Transverse colon (tissue), 4 donors: ENCODE measurements at regions of chr11 and their contacts with region 1.

Region 1: GRCh38 chr11:6505577-6506240 is 8.6 kb downstream of the DNHD1 start:
- DNase-seq: no peak
- H3K4me3 ChIP-seq: no peak overlapping the region
- H3K27ac ChIP-seq: peak overlapping the region in 2 of 4 donors; percentile 12 to 36
- H3K4me1 ChIP-seq: no peaks in the 10 kb centered on the region
- H3K27me3 ChIP-seq: no peaks in the 10 kb centered on the region
- CTCF ChIP-seq: peak; percentile 64 to 80 (median 73)
- EP300 ChIP-seq: no peak
- POLR2A ChIP-seq: no peak

Region 2: DNA sequence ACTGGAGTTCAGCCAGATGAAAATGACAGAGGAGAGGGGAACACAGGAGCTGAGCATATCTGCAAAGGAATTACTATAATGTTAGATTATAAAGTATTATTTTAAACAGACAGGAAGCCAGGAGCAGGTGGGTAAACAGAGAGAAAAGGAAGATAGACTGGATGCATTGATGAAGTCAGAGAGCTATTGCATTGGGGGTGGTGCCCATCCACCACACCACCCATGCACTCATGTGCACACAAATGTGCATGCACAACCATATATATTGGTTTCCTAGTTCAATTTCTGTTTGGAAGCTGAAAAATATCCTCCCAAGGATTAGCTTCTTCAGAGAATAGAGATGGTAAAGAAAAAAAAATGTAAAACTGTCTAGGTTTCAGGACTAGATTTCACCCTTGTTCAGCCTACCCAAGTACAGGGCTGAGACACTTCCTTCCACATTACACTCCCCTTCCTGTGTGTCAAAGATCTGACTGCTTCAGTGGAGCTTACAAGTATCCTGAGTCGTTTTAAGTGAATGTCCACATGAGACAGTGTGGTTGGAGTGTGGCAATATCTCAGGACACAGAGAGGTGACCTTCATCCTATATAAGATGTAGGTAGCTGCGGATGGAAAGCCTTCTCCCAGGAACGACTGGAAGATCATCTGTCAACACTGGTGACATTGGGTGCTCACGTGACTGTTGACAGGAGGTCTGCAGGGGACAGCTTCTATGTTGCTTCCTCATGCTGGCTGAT is 127.6 kb before region 1 on chr11:
- in situ Hi-C with region 1: loop called in 1 of 4 experiments (anchors 10 kb)
- intact Hi-C with region 1: loop called (anchors 10 kb)
- DNase-seq: no peak
- H3K4me3 ChIP-seq: no peak overlapping the region
- H3K27ac ChIP-seq: no peak overlapping the region
- H3K4me1 ChIP-seq: peaks cover 0 to 15% (median 0%) of the 10 kb centered on the region in 4 donors
- H3K27me3 ChIP-seq: no peaks in the 10 kb centered on the region
- CTCF ChIP-seq: no peak
- EP300 ChIP-seq: no peak
- POLR2A ChIP-seq: no peak

Region 3: DNA sequence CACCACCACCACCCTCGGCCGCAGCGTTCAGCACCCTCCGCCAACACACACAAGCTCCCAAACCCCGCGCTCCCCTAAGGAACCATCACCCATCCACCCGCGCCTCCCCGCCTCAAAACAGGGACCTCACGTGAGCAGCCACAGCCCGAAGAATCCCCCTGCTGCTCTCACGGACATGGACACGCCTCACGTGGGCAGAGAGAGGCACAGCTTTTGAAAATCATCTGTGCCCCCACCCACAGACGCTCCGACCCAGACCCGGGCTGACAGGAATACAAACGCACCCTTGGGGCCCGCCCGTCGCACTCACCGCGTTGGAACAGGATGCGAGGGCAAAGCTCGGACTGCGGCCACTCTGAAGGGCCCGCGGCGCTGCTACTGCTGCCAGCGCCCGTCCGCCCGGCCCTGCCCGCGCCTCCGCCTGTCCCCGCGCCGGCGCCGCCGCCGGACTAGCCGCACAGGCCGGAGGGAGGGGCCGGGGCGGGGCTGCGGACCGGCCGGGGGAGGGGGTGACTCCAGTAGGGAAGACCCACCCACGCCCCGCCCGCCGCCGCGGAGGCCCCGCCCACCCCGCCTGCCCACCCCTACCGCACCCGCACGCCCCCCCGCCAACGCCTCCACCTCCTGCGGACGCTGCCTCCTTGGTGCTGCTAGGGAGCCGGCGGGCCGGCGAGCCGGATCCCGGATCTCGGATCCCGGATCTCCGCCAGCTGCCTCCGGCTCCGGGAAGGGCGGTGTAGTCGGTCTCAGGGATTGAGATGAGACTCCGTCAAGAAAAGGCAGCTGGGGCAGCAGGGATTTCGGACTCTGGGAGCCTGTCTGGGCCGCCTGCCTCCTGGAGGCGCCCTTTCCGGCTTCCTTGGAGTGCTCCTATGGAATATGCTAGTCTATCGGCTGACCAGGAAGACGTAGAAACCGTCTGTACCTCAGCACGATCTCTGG is 32.0 kb before region 1 on chr11 and contains the start of gene TRIM3:
- in situ Hi-C with region 1: no loop called
- intact Hi-C with region 1: no loop called
- DNase-seq: peak; percentile 96
- H3K4me3 ChIP-seq: peak within 1 kb of the TSS; percentile 55 to 77 (median 72)
- H3K27ac ChIP-seq: peak within 1 kb of the TSS; percentile 92 to 99 (median 97)
- H3K4me1 ChIP-seq: peaks cover 20 to 61% (median 45%) of the 10 kb centered on the region in 4 donors
- H3K27me3 ChIP-seq: no peaks in the 10 kb centered on the region
- CTCF ChIP-seq: peak in 3 of 5 experiments; percentile 9 to 25 (median 13)
- EP300 ChIP-seq: no peak
- POLR2A ChIP-seq: peak; percentile 85
- total RNA-seq, gene TRIM3: 49.1 to 205 (median 67.9) TPM

Region 4: GRCh38 chr11:6968816-6969215 is 463.1 kb after region 1 on chr11:
- in situ Hi-C with region 1: no loop called
- intact Hi-C with region 1: no loop called
- DNase-seq: no peak
- H3K4me3 ChIP-seq: no peak overlapping the region
- H3K27ac ChIP-seq: no peak overlapping the region
- H3K4me1 ChIP-seq: no peaks in the 10 kb centered on the region
- H3K27me3 ChIP-seq: no peaks in the 10 kb centered on the region
- CTCF ChIP-seq: no peak
- EP300 ChIP-seq: no peak
- POLR2A ChIP-seq: no peak